ENCODE measurements at regions of chr12 and their contacts with region 1.

Region 1: GRCh38 chr12:127108360-127109215 is 1158.4 kb upstream of the TMEM132C start:
- DNase-seq: peak; percentile 45 to 76 (median 68)
- ATAC-seq: peak; percentile 43 to 78
- H3K4me3 ChIP-seq: no peak overlapping the region
- H3K27ac ChIP-seq: no peak overlapping the region
- H3K4me1 ChIP-seq: no peaks in the 10 kb centered on the region
- H3K27me3 ChIP-seq: no peaks in the 10 kb centered on the region

Region 2: GRCh38 chr12:127293507-127294310 is 185.1 kb after region 1 on chr12:
- intact Hi-C with region 1: loop called in 3 of 4 experiments (anchors 2 to 10 kb)
- DNase-seq: peak; percentile 41 to 80 (median 71)
- ATAC-seq: peak; percentile 76 to 78
- H3K4me3 ChIP-seq: no peak overlapping the region
- H3K27ac ChIP-seq: no peak overlapping the region
- H3K4me1 ChIP-seq: no peaks in the 10 kb centered on the region
- H3K27me3 ChIP-seq: no peaks in the 10 kb centered on the region

Region 3: GRCh38 chr12:127373559-127373958 is 265.0 kb after region 1 on chr12:
- intact Hi-C with region 1: loop called in 1 of 4 experiments (anchors 10 kb)
- DNase-seq: no peak
- ATAC-seq: no peak
- H3K4me3 ChIP-seq: no peak overlapping the region
- H3K27ac ChIP-seq: no peak overlapping the region
- H3K4me1 ChIP-seq: no peaks in the 10 kb centered on the region
- H3K27me3 ChIP-seq: no peaks in the 10 kb centered on the region

Region 4: GRCh38 chr12:127381048-127381668 is 272.6 kb after region 1 on chr12:
- intact Hi-C with region 1: loop called (anchors 2 to 10 kb)
- DNase-seq: peak; percentile 19 to 73 (median 67)
- ATAC-seq: peak; percentile 72 to 75
- H3K4me3 ChIP-seq: no peak overlapping the region
- H3K27ac ChIP-seq: no peak overlapping the region
- H3K4me1 ChIP-seq: no peaks in the 10 kb centered on the region
- H3K27me3 ChIP-seq: no peaks in the 10 kb centered on the region